WTC11 (cell line): ENCODE measurements at regions of chr10 and their contacts with region 1.

Region 1: GRCh38 chr10:109956454-109957091 is 33.3 kb upstream of the XPNPEP1 start:
- DNase-seq: peak; percentile 39
- ATAC-seq: peak; percentile 93
- H3K4me3 Mint-ChIP-seq: no peak overlapping the region
- H3K27ac Mint-ChIP-seq: no peak overlapping the region; the same call in 1 of the 2 replicates
- H3K4me1 Mint-ChIP-seq: peaks cover 49% of the 10 kb centered on the region
- H3K27me3 Mint-ChIP-seq: no peaks in the 10 kb centered on the region; the same call in 1 of the 2 replicates
- CTCF ChIP-seq: peak; percentile 83

Region 2: GRCh38 chr10:109823196-109823595 is 133.4 kb before region 1 on chr10:
- CTCF ChIA-PET with region 1: no interaction called
- POLR2A ChIA-PET with region 1: no interaction called
- DNase-seq: no peak
- ATAC-seq: no peak
- H3K4me3 Mint-ChIP-seq: no peak overlapping the region
- H3K27ac Mint-ChIP-seq: no peak overlapping the region
- H3K4me1 Mint-ChIP-seq: peaks cover 4% of the 10 kb centered on the region
- H3K27me3 Mint-ChIP-seq: no peaks in the 10 kb centered on the region
- CTCF ChIP-seq: no peak

Region 3: GRCh38 chr10:109902934-109903589 is 53.5 kb before region 1 on chr10:
- CTCF ChIA-PET with region 1: no interaction called
- POLR2A ChIA-PET with region 1: no interaction called
- DNase-seq: no peak
- ATAC-seq: no peak
- H3K4me3 Mint-ChIP-seq: no peak overlapping the region
- H3K27ac Mint-ChIP-seq: peak overlapping the region; percentile 22; the same call in 1 of the 2 replicates
- H3K4me1 Mint-ChIP-seq: no peaks in the 10 kb centered on the region; the same call in 1 of the 2 replicates
- H3K27me3 Mint-ChIP-seq: no peaks in the 10 kb centered on the region
- CTCF ChIP-seq: no peak

Region 4: DNA sequence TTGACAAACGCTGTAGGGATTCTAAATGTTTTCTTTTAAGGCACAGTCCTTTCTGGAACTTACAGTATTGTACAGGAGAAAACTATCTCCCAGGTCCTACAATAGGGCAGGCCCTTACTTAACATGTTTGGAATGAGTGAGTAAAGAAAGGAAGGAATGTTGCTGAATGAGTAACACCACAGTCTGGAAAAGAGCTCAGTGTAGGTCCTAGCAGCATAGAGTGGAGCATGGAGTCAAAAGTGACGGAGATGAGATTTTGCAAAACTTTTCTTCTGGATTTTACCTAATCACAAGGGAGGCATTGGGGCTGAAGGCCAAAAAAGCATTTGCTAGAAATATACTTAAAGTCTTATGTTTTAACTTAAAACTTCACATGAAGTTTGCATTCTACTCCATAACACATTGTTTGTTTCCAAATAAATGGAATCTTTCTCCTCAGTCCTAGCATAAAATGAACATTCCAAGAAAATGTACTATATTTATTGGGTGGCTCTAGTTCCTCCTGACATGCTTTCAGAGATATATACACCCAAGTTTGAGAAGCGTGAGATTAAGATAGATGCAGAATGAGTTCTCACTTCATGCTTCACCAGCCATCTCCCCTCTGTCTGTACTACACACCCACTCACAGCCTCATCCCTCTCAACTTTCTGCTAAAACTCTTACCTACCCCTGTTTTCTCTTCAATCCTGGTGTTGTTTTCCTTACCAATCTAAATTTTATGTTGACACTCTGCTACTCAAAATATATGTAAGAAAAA is 31.1 kb after region 1 on chr10:
- CTCF ChIA-PET with region 1: no interaction called
- POLR2A ChIA-PET with region 1: interaction called, 11 read pairs
- DNase-seq: no peak
- ATAC-seq: peak; percentile 81
- H3K4me3 Mint-ChIP-seq: no peak overlapping the region
- H3K27ac Mint-ChIP-seq: no peak overlapping the region
- H3K4me1 Mint-ChIP-seq: peaks cover 5% of the 10 kb centered on the region; the same call in 1 of the 2 replicates
- H3K27me3 Mint-ChIP-seq: no peaks in the 10 kb centered on the region
- CTCF ChIP-seq: no peak

Region 5: GRCh38 chr10:110029450-110029849 is 72.9 kb after region 1 on chr10:
- CTCF ChIA-PET with region 1: no interaction called
- POLR2A ChIA-PET with region 1: no interaction called
- DNase-seq: no peak
- ATAC-seq: no peak
- H3K4me3 Mint-ChIP-seq: no peak overlapping the region
- H3K27ac Mint-ChIP-seq: no peak overlapping the region
- H3K4me1 Mint-ChIP-seq: peaks cover 19% of the 10 kb centered on the region
- H3K27me3 Mint-ChIP-seq: no peaks in the 10 kb centered on the region
- CTCF ChIP-seq: no peak